MCF 10A (cell line): ENCODE measurements at regions of chr20 and their contacts with region 1.

Region 1: GRCh38 chr20:33299111-33299603 is 16.1 kb downstream of the BPIFB1 start:
- DNase-seq: peak; percentile 64
- H3K4me3 Mint-ChIP-seq: no peak overlapping the region
- H3K27ac Mint-ChIP-seq: no peak overlapping the region
- H3K4me1 Mint-ChIP-seq: no peaks in the 10 kb centered on the region
- H3K27me3 Mint-ChIP-seq: peaks cover 68% of the 10 kb centered on the region
- CTCF ChIP-seq: peak; percentile 96

Region 2: GRCh38 chr20:33097001-33097400 is 202.2 kb before region 1 on chr20:
- CTCF ChIA-PET with region 1: interaction called, 6 read pairs
- POLR2A ChIA-PET with region 1: no interaction called
- intact Hi-C with region 1: loop called (anchors 5 kb)
- DNase-seq: no peak
- H3K4me3 Mint-ChIP-seq: no peak overlapping the region
- H3K27ac Mint-ChIP-seq: no peak overlapping the region
- H3K4me1 Mint-ChIP-seq: no peaks in the 10 kb centered on the region
- H3K27me3 Mint-ChIP-seq: peaks cover 20% of the 10 kb centered on the region
- CTCF ChIP-seq: no peak

Region 3: GRCh38 chr20:33176101-33176500 is 123.1 kb before region 1 on chr20:
- CTCF ChIA-PET with region 1: interaction called, 12 read pairs
- POLR2A ChIA-PET with region 1: no interaction called
- intact Hi-C with region 1: no loop called
- DNase-seq: no peak
- H3K4me3 Mint-ChIP-seq: no peak overlapping the region
- H3K27ac Mint-ChIP-seq: no peak overlapping the region
- H3K4me1 Mint-ChIP-seq: no peaks in the 10 kb centered on the region
- H3K27me3 Mint-ChIP-seq: no peaks in the 10 kb centered on the region
- CTCF ChIP-seq: no peak

Region 4: DNA sequence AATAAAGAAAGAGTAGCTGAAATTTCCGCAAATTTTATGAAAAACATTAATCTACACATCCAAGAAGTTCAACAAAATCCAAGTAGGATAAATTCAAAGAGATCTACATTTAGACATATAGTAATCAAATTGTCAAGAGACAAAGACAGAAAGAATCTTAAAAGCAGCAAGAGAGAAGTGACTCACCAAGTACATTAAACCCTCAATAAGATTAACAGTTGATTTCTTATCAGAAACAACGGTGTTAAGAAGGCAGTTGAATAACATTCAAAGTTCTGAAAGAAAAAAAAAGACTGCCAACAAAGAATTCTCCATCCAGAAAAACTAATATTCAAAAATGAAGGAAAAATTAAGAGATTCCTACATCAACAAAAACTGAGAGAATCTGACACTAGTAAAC is 44.2 kb before region 1 on chr20:
- CTCF ChIA-PET with region 1: no interaction called
- POLR2A ChIA-PET with region 1: no interaction called
- intact Hi-C with region 1: no loop called
- DNase-seq: no peak
- H3K4me3 Mint-ChIP-seq: no peak overlapping the region
- H3K27ac Mint-ChIP-seq: no peak overlapping the region
- H3K4me1 Mint-ChIP-seq: no peaks in the 10 kb centered on the region
- H3K27me3 Mint-ChIP-seq: peaks cover 50% of the 10 kb centered on the region
- CTCF ChIP-seq: no peak

Region 5: GRCh38 chr20:33309631-33310030 is 10.5 kb after region 1 on chr20:
- CTCF ChIA-PET with region 1: interaction called, 12 read pairs
- POLR2A ChIA-PET with region 1: interaction called, 5 read pairs
- intact Hi-C with region 1: no loop called
- DNase-seq: no peak
- H3K4me3 Mint-ChIP-seq: no peak overlapping the region
- H3K27ac Mint-ChIP-seq: no peak overlapping the region
- H3K4me1 Mint-ChIP-seq: no peaks in the 10 kb centered on the region
- H3K27me3 Mint-ChIP-seq: no peaks in the 10 kb centered on the region
- CTCF ChIP-seq: no peak

Region 6: GRCh38 chr20:33443512-33444239 is 144.5 kb after region 1 on chr20 and contains the start of gene SNTA1:
- CTCF ChIA-PET with region 1: no interaction called
- POLR2A ChIA-PET with region 1: no interaction called
- intact Hi-C with region 1: no loop called
- DNase-seq: peak; percentile 77
- H3K4me3 Mint-ChIP-seq: peak within 1 kb of the TSS; percentile 73
- H3K27ac Mint-ChIP-seq: no peak within 1 kb of the TSS
- H3K4me1 Mint-ChIP-seq: peaks cover 4% of the 10 kb centered on the region
- H3K27me3 Mint-ChIP-seq: no peaks in the 10 kb centered on the region
- CTCF ChIP-seq: no peak
- total RNA-seq, gene SNTA1: 1.4 and 2.0 TPM in 2 replicates